SK-N-SH (cell line): ENCODE measurements at regions of chr12 and their contacts with region 1.

Region 1: GRCh38 chr12:10153271-10154144 is 18.4 kb downstream of the OLR1 start:
- DNase-seq: peak; percentile 64
- H3K4me3 ChIP-seq: peak overlapping the region; percentile 45 to 77
- H3K27ac ChIP-seq: no peak overlapping the region
- H3K4me1 ChIP-seq: peaks cover 0 to 2% of the 10 kb centered on the region in 2 experiments; a peak in 1 of 4 replicates
- H3K27me3 ChIP-seq: peaks cover 8% of the 10 kb centered on the region; the same call in 1 of the 2 replicates
- CTCF ChIP-seq: peak; percentile 86
- EP300 ChIP-seq: no peak
- RAD21 ChIP-seq: peak; percentile 58

Region 2: DNA sequence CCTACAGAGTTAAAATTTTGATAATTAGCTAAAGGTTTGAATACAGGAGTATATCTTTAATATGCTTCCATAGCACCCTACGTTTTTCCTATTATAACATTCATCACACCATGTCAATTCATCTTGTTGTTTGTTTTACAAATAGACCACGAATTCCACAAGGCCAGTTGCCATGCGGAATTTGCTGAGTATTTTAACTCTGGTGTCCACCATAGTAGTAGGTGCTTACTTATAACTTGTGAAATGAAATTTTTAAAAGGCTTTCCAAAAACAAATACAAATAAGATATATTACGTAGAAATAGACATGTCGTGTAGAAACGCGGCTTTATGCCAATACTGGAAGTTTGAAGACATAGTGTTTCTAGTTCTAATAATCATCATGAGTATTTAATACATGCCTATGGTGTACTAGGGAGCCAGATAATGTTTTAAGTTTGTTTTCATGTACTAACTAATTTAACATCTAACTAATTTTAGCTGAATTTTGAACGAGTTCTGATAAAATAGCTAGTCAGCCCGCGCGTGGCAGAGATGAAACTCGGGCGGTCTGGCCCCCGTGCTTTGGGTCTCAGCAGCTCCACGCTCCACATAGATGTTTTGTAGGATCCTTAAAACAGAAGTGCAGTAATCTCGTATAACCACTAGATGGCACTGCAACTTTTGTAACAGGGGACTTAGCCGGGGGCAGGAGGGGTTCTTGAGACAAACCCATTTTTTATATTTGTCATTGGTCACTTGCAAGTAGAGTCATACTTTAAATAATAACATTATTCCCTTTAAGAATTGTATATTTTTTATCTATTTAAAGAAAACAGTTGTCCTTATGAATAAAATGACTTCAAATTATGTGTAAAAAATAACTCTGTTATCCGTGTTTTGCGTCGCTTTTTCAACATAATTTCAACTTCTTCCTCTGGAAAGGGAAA is 403.0 kb before region 1 on chr12:
- CTCF ChIA-PET with region 1: interaction called, 18 read pairs
- POLR2A ChIA-PET with region 1: no interaction called
- DNase-seq: peak; percentile 67
- H3K4me3 ChIP-seq: peak overlapping the region in 1 of 2 experiments; percentile 34; a peak in 1 of 4 replicates
- H3K27ac ChIP-seq: no peak overlapping the region
- H3K4me1 ChIP-seq: no peaks in the 10 kb centered on the region; a peak in 1 of 4 replicates
- H3K27me3 ChIP-seq: peaks cover 21% of the 10 kb centered on the region
- CTCF ChIP-seq: peak; percentile 83
- EP300 ChIP-seq: no peak
- RAD21 ChIP-seq: peak; percentile 61

Region 3: GRCh38 chr12:10140001-10140400 is 13.5 kb before region 1 on chr12:
- CTCF ChIA-PET with region 1: interaction called, 13 read pairs
- POLR2A ChIA-PET with region 1: no interaction called
- DNase-seq: peak; percentile 10
- H3K4me3 ChIP-seq: no peak overlapping the region
- H3K27ac ChIP-seq: no peak overlapping the region
- H3K4me1 ChIP-seq: no peaks in the 10 kb centered on the region
- H3K27me3 ChIP-seq: peaks cover 18% of the 10 kb centered on the region; the same call in 1 of the 2 replicates
- CTCF ChIP-seq: peak; percentile 49
- EP300 ChIP-seq: no peak
- RAD21 ChIP-seq: peak; percentile 67

Region 4: GRCh38 chr12:10171954-10172353 is 18.4 kb after region 1 on chr12 and contains the start of gene OLR1:
- CTCF ChIA-PET with region 1: interaction called, 11 read pairs
- POLR2A ChIA-PET with region 1: no interaction called
- DNase-seq: no peak
- H3K4me3 ChIP-seq: no peak within 1 kb of the TSS
- H3K27ac ChIP-seq: no peak within 1 kb of the TSS
- H3K4me1 ChIP-seq: no peaks in the 10 kb centered on the region
- H3K27me3 ChIP-seq: peaks cover 10% of the 10 kb centered on the region; the same call in 1 of the 2 replicates
- CTCF ChIP-seq: no peak
- EP300 ChIP-seq: no peak
- RAD21 ChIP-seq: no peak
- polyA plus RNA-seq, gene OLR1: not detected in 2 replicates

Region 5: DNA sequence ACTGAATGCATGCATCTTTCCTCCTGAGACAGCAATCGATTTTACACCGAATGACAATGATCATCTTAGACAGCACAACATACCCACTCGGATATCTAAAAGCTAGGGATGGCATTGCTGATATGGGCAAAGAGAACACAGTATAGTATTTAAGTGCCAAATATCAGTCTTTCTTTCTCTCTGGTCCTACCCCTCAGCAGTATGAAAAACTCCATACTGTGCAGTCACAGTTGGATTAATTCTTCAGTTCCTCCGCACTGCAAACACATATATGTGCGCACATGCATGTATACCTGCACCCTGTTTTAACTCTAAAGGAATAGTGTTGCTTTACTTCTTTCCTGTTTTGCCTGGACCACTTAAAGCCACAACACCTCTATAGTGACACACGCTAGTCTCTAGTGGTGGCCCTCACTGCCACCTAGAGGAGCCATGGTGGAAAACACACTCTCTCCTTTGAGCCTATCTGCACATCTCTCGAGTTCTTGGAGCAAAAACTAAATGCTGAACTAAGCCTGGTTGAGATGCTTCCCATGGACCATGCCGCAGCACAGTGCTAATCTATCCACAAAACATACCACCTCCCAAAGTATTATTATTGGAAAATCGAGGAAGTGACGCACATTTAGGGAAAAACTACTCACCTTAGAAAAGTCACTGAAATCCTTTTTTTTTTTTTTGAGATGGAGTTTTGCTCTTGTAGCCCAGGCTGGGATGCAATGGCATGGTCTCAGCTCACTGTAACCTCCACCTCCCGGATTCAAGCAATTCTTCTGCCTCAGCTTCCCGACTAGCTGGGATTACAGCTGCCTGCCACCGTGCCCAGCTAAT is 37.3 kb after region 1 on chr12:
- CTCF ChIA-PET with region 1: interaction called, 48 read pairs
- POLR2A ChIA-PET with region 1: no interaction called
- DNase-seq: peak; percentile 60
- H3K4me3 ChIP-seq: no peak overlapping the region
- H3K27ac ChIP-seq: no peak overlapping the region
- H3K4me1 ChIP-seq: no peaks in the 10 kb centered on the region
- H3K27me3 ChIP-seq: peaks cover 29% of the 10 kb centered on the region; the same call in 1 of the 2 replicates
- CTCF ChIP-seq: peak; percentile 69
- EP300 ChIP-seq: no peak
- RAD21 ChIP-seq: peak; percentile 72

Region 6: GRCh38 chr12:10196210-10196609 is 42.7 kb after region 1 on chr12:
- CTCF ChIA-PET with region 1: interaction called, 48 read pairs
- POLR2A ChIA-PET with region 1: interaction called, 3 read pairs
- DNase-seq: no peak
- H3K4me3 ChIP-seq: no peak overlapping the region
- H3K27ac ChIP-seq: no peak overlapping the region
- H3K4me1 ChIP-seq: no peaks in the 10 kb centered on the region
- H3K27me3 ChIP-seq: peaks cover 37% of the 10 kb centered on the region; the same call in 1 of the 2 replicates
- CTCF ChIP-seq: no peak
- EP300 ChIP-seq: no peak
- RAD21 ChIP-seq: no peak